Right ventricle myocardium inferior (tissue), 1 donor: ENCODE measurements at regions of chr10 and their contacts with region 1.

Region 1: GRCh38 chr10:18312374-18313139 is 172.3 kb downstream of the CACNB2 start:
- DNase-seq: no peak
- ATAC-seq: peak; percentile 70

Region 2: DNA sequence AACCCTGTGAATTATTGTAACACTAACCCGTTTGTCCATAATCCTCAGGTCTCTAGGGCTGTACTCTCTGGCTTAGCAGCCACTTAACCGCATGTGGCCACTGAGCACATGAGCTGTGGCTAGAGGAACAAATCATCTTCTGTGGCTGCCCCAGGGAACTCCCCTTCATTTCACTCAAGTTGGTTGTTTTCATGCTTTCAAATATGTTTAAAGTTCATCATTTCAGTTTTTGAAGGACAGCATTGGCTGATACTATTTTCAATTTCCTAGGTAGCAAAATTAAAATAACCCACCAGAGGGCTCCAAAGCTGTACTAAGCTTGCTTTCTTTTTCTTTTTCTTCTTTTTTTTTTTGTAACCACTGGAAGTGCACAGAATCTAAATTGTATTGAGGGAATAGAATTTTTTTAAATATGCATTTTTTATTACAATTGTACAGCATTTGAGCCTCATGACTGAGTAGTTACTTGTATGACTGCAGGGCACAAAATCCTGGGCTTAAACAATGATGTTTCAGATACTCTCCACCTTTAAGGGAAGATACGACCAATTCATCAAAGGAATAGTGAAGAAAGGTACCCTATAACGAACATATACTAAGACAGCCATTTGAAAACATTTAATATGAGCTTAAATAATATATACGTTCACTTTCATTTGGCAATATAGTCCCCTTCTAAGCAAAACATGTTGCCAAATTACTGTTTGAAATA is 464.8 kb before region 1 on chr10:
- intact Hi-C with region 1: loop called (anchors 5 kb)
- DNase-seq: no peak
- ATAC-seq: no peak

Region 3: GRCh38 chr10:17910125-17910789 is 402.3 kb before region 1 on chr10:
- intact Hi-C with region 1: loop called (anchors 5 kb)
- DNase-seq: no peak
- ATAC-seq: no peak

Region 4: GRCh38 chr10:18233775-18234174 is 78.8 kb before region 1 on chr10:
- intact Hi-C with region 1: loop called (anchors 2 kb)
- DNase-seq: peak; percentile 72
- ATAC-seq: peak; percentile 92

Region 5: GRCh38 chr10:18378766-18379165 is 66.2 kb after region 1 on chr10:
- intact Hi-C with region 1: no loop called
- DNase-seq: no peak
- ATAC-seq: peak; percentile 56